K562 (cell line): ENCODE measurements at regions of chrX and their contacts with region 1.

Region 1: GRCh38 chrX:45186643-45187026 is 14.0 kb downstream of the DIPK2B start:
- DNase-seq: no peak
- ATAC-seq: peak; percentile 61
- H3K4me3 ChIP-seq: no peak overlapping the region
- H3K27ac ChIP-seq: no peak overlapping the region
- H3K4me1 ChIP-seq: peaks cover 0 to 2% of the 10 kb centered on the region in 2 experiments; a peak in 2 of 5 replicates
- H3K27me3 ChIP-seq: no peaks in the 10 kb centered on the region; a peak in 1 of 5 replicates
- CTCF ChIP-seq: no peak
- EP300 ChIP-seq: no peak
- POLR2A ChIP-seq: no peak
- RAD21 ChIP-seq: no peak

Region 2: GRCh38 chrX:45083314-45083713 is 103.3 kb before region 1 on chrX:
- CTCF ChIA-PET with region 1: no interaction called
- POLR2A ChIA-PET with region 1: no interaction called
- in situ Hi-C with region 1: no loop called
- intact Hi-C with region 1: loop called (anchors 10 kb)
- DNase-seq: no peak
- ATAC-seq: no peak
- H3K4me3 ChIP-seq: no peak overlapping the region
- H3K27ac ChIP-seq: no peak overlapping the region
- H3K4me1 ChIP-seq: no peaks in the 10 kb centered on the region
- H3K27me3 ChIP-seq: no peaks in the 10 kb centered on the region
- CTCF ChIP-seq: no peak
- EP300 ChIP-seq: no peak
- POLR2A ChIP-seq: no peak
- RAD21 ChIP-seq: no peak

Region 3: DNA sequence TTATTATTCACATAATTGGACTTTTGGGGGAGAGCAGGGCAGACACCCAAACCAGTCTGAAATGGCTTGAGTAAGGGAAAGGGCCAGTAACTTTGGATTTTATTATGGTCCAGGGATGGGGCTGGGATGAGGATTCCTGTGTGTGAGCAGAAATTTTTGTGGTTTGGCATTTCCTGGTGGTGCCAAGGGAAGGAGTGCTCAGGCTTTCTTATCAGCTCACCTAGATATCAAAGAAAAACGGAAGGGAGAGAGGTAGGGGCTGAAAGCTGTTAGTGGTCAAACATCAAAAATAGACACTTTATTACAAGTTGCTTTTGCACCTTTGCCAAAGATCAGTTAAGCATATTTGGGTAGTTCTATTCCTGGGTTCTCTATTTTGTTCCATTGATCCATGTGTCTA is 142.6 kb after region 1 on chrX:
- CTCF ChIA-PET with region 1: no interaction called
- POLR2A ChIA-PET with region 1: no interaction called
- in situ Hi-C with region 1: no loop called
- intact Hi-C with region 1: no loop called
- DNase-seq: no peak
- ATAC-seq: no peak
- H3K4me3 ChIP-seq: no peak overlapping the region
- H3K27ac ChIP-seq: no peak overlapping the region
- H3K4me1 ChIP-seq: no peaks in the 10 kb centered on the region
- H3K27me3 ChIP-seq: no peaks in the 10 kb centered on the region
- CTCF ChIP-seq: no peak
- EP300 ChIP-seq: no peak
- POLR2A ChIP-seq: no peak
- RAD21 ChIP-seq: no peak